Activated CD4-positive, alpha-beta memory T cell treated with anti-CD3 and anti-CD28 coated beads for 36 hours (primary cell): ENCODE measurements at regions of chr6 and their contacts with region 1.

Region 1: GRCh38 chr6:106141441-106142237 is 55.5 kb downstream of the PRDM1 start:
- DNase-seq: peak; percentile 80
- H3K4me3 Mint-ChIP-seq: peak overlapping the region; percentile 10
- H3K27ac Mint-ChIP-seq: peak overlapping the region; percentile 83
- H3K4me1 Mint-ChIP-seq: peaks cover 49% of the 10 kb centered on the region
- H3K27me3 Mint-ChIP-seq: no peaks in the 10 kb centered on the region

Region 2: GRCh38 chr6:105769987-105770386 is 371.7 kb before region 1 on chr6:
- CTCF ChIA-PET with region 1: no interaction called
- POLR2A ChIA-PET with region 1: no interaction called
- intact Hi-C with region 1: no loop called
- DNase-seq: no peak
- H3K4me3 Mint-ChIP-seq: no peak overlapping the region
- H3K27ac Mint-ChIP-seq: no peak overlapping the region
- H3K4me1 Mint-ChIP-seq: no peaks in the 10 kb centered on the region
- H3K27me3 Mint-ChIP-seq: peaks cover 2% of the 10 kb centered on the region

Region 3: GRCh38 chr6:105967917-105968584 is 173.6 kb before region 1 on chr6:
- CTCF ChIA-PET with region 1: no interaction called
- POLR2A ChIA-PET with region 1: no interaction called
- intact Hi-C with region 1: no loop called
- DNase-seq: no peak
- H3K4me3 Mint-ChIP-seq: no peak overlapping the region
- H3K27ac Mint-ChIP-seq: no peak overlapping the region
- H3K4me1 Mint-ChIP-seq: no peaks in the 10 kb centered on the region
- H3K27me3 Mint-ChIP-seq: peaks cover 6% of the 10 kb centered on the region

Region 4: DNA sequence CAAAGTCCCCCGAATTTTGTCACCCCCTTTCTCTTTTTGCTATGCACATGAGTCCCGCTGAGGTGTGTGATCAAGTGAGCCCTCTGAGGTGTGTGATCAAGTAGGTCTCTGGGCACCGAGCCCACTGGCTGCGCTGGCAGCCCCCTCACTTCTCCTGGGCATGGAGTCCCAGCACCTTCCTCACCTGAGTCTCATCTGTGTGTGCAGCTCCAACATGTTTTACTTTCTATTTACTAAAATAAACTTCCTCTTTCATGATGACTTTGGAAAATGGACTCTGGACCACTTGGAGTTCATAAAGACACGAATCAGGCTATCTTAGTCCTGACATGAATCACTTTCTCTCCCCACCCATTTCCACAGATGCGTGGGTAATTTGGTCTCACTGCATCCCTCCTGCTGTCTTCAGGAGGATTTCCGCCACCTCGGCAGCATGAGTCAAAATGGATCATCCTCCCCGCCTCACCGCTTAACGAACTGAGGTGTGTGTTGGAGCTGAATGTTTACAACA is 15.7 kb before region 1 on chr6:
- CTCF ChIA-PET with region 1: interaction called, 3 read pairs
- POLR2A ChIA-PET with region 1: interaction called, 7 read pairs
- intact Hi-C with region 1: loop called (anchors 1 kb)
- DNase-seq: peak; percentile 88
- H3K4me3 Mint-ChIP-seq: peak overlapping the region; percentile 65
- H3K27ac Mint-ChIP-seq: peak overlapping the region; percentile 80
- H3K4me1 Mint-ChIP-seq: peaks cover 44% of the 10 kb centered on the region
- H3K27me3 Mint-ChIP-seq: peaks cover 3% of the 10 kb centered on the region